ENCODE measurements at regions of chr5 and their contacts with region 1.

Region 1: DNA sequence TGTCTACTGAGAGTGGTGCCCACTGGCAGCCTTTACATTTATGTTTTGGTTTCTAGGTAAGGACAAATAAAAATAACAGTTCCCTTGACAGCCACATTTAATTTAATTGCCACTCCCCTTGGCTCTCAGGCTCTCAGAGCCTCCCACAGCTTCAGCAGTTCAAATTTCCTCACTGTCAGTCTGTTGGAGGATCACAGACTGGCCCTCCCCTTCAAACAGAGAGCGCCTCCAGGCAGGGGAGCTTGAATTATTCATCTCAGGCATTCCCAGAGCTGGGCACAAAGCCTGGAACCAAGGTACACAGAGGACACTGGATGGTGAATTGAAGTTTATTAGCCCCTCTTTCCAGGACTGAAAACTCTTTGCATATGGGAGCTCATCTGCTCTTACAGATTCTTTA is 407.7 kb downstream of the SPOCK1 start:
- DNase-seq: peak in 1 of 2 donors; percentile 61
- H3K4me3 ChIP-seq: no peak overlapping the region
- H3K27ac ChIP-seq: no peak overlapping the region
- H3K4me1 ChIP-seq: no peaks in the 10 kb centered on the region
- H3K27me3 ChIP-seq: no peaks in the 10 kb centered on the region
- CTCF ChIP-seq: no peak
- POLR2A ChIP-seq: no peak

Region 2: DNA sequence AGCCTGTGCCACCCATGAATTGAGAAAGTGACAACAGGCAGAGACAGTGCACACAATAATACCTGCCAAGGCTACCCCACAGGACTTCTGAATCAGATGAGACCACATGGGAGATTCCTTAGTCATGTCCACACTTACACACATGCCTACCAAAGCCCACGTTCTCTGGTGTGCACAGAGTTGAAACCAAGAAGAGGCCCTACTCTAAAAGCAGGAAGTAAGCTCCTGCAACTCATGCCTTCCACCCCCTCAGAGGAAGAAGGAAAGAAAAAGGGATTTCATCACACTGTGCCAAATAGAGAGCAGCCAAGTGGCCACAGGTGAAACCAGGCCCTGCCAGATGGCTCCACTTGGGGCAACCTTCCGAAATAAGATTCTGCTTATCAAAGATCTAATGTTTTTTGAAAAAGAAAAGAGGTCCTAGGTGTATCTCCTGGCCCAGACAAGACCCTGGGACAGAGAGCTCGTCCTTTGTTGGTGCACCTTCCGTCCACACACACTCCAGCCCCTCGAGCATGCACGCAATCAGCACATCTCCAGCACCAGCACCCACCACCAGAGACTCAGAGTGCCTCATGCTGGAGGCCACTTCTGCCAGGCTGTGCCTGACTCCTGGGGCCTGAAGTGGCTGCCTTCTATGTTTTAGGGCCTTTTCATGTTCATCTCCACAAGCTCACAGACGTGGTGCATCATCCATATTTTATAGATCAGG is 522.2 kb after region 1 on chr5:
- intact Hi-C with region 1: loop called (anchors 5 kb)
- DNase-seq: no peak
- H3K4me3 ChIP-seq: no peak overlapping the region
- H3K27ac ChIP-seq: no peak overlapping the region
- H3K4me1 ChIP-seq: no peaks in the 10 kb centered on the region
- H3K27me3 ChIP-seq: no peaks in the 10 kb centered on the region
- CTCF ChIP-seq: no peak
- POLR2A ChIP-seq: no peak

Measured in breast epithelium (tissue), 4 donors.